ENCODE measurements at regions of chr7 and their contacts with region 1.

Region 1: DNA sequence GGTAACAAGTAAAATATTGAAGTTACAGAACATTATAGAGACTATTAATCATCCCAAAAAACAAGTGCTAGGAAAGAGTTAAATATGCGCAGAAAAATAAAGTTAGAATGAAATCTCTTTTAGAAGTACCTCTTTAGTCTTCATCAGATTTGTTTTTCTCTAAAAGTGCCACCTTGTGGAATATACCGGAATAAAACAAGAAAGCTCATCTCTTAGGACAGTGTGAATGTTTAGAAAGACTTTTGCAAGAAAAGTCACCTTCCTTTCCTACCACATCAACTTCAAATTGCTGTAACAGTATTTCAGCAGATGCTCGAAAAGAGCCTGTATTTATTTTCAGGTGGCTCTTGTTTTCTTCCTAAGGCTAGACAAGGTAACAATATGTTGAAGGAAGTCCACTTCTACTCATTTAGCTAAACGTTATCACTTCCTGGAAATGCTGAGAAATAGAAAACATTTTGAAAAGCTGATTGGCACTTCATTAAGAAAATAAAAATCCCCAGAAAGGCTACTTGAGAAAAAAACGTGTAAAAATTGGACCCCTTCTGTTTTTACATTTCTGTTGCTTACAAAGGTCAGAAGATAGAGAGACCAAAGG is 19.8 kb upstream of the FAM133B start:
- DNase-seq: no peak
- H3K4me3 Mint-ChIP-seq: no peak overlapping the region
- H3K27ac Mint-ChIP-seq: peak overlapping the region; percentile 68
- H3K4me1 Mint-ChIP-seq: peaks cover 46% of the 10 kb centered on the region
- H3K27me3 Mint-ChIP-seq: no peaks in the 10 kb centered on the region

Region 2: GRCh38 chr7:92584996-92585395 is 25.0 kb before region 1 on chr7:
- CTCF ChIA-PET with region 1: interaction called, 43 read pairs
- POLR2A ChIA-PET with region 1: interaction called, 26 read pairs
- DNase-seq: no peak
- H3K4me3 Mint-ChIP-seq: no peak overlapping the region
- H3K27ac Mint-ChIP-seq: peak overlapping the region; percentile 60
- H3K4me1 Mint-ChIP-seq: peaks cover 58% of the 10 kb centered on the region
- H3K27me3 Mint-ChIP-seq: no peaks in the 10 kb centered on the region

Region 3: DNA sequence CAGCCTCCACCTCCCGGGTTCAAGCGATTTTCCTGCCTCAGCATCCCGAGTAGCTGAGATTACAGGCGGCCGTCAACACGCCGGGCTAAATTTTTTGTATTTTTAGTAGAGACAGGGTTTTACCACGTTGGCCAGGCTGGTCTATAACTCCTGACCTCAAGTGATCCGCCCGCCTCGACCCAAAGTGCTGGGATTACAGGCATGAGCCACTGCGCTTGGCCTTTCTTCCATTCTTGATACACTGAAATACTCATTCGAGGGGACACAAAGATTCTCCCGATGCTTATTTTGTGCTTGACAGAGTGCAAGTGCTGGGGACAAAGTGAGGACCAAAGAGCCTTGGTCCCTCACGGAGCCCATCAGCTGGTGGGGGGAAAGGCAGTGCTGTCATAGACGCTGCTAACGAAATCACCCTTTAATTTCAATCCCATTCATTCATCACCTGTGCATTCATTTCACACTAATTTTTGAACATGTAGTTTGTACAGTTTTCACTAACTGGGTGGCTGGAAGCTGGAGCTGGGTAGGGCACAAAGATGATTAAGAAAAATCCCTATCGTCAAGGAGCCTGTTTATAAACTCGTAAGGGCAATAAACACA is 19.2 kb before region 1 on chr7:
- CTCF ChIA-PET with region 1: interaction called, 44 read pairs
- POLR2A ChIA-PET with region 1: interaction called, 26 read pairs
- DNase-seq: no peak
- H3K4me3 Mint-ChIP-seq: peak overlapping the region; percentile 81
- H3K27ac Mint-ChIP-seq: no peak overlapping the region
- H3K4me1 Mint-ChIP-seq: peaks cover 42% of the 10 kb centered on the region
- H3K27me3 Mint-ChIP-seq: peaks cover 4% of the 10 kb centered on the region

Region 4: GRCh38 chr7:92598310-92598981 is 11.6 kb before region 1 on chr7:
- CTCF ChIA-PET with region 1: interaction called, 44 read pairs
- POLR2A ChIA-PET with region 1: interaction called, 8 read pairs
- DNase-seq: no peak
- H3K4me3 Mint-ChIP-seq: no peak overlapping the region
- H3K27ac Mint-ChIP-seq: no peak overlapping the region
- H3K4me1 Mint-ChIP-seq: no peaks in the 10 kb centered on the region
- H3K27me3 Mint-ChIP-seq: no peaks in the 10 kb centered on the region

Region 5: GRCh38 chr7:92731335-92732063 is 121.5 kb after region 1 on chr7:
- CTCF ChIA-PET with region 1: no interaction called
- POLR2A ChIA-PET with region 1: no interaction called
- DNase-seq: no peak
- H3K4me3 Mint-ChIP-seq: no peak overlapping the region
- H3K27ac Mint-ChIP-seq: peak overlapping the region; percentile 78
- H3K4me1 Mint-ChIP-seq: peaks cover 55% of the 10 kb centered on the region
- H3K27me3 Mint-ChIP-seq: no peaks in the 10 kb centered on the region

Measured in activated CD4-positive, alpha-beta memory T cell treated with anti-CD3 and anti-CD28 coated beads, Interleukin-2, amount 10 ng/mL, durations not matched to agents 7 days and 5 days (primary cell).